Sigmoid colon (tissue), 7 donors: ENCODE measurements at regions of chr9 and their contacts with region 1.

Region 1: GRCh38 chr9:125407974-125408900 is 146.6 kb downstream of the GAPVD1 start:
- DNase-seq: peak; percentile 91
- H3K4me3 ChIP-seq: peak overlapping the region; percentile 53 to 81 (median 68)
- H3K27ac ChIP-seq: peak overlapping the region; percentile 4 to 80 (median 79)
- H3K4me1 ChIP-seq: peaks cover 0 to 18% (median 13%) of the 10 kb centered on the region in 4 donors
- H3K27me3 ChIP-seq: no peaks in the 10 kb centered on the region
- CTCF ChIP-seq: peak; percentile 81 to 89 (median 86)
- EP300 ChIP-seq: no peak
- POLR2A ChIP-seq: no peak

Region 2: GRCh38 chr9:125372441-125373226 is 35.6 kb before region 1 on chr9:
- intact Hi-C with region 1: no loop called
- DNase-seq: no peak
- H3K4me3 ChIP-seq: no peak overlapping the region
- H3K27ac ChIP-seq: no peak overlapping the region
- H3K4me1 ChIP-seq: peaks cover 0 to 10% (median 7%) of the 10 kb centered on the region in 4 donors
- H3K27me3 ChIP-seq: peaks cover 0 to 6% (median 0%) of the 10 kb centered on the region in 3 donors
- CTCF ChIP-seq: no peak
- EP300 ChIP-seq: no peak
- POLR2A ChIP-seq: no peak

Region 3: DNA sequence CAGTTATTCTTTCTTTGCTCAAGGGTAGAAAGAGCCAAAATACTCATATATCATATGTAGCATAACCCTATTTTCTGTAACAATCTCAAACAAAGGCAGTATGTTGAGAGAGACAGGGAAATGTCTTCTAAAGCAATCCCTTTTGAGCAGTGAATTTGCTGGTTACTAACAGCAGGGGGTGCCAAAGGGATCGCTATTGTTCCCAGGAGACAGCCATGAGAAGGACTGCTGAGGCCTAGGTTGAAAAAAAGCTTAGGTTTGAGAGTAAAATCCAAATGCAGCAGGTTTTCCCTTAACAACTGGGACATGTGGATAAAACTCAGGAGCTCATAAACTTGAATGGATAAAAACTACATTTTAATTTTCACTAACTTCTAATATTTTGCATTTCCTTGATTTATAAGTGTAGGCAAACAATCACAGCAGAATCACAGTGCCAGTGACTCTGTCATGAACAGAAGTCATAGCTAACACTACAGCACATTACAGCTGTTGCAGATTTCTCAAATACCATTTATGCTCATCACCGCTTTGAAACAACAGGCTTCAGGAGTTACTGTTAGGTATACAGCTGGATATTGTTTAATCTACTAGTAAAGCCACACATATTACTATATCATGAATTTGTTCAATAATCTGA is 150.3 kb after region 1 on chr9:
- intact Hi-C with region 1: loop called (anchors 5 kb)
- DNase-seq: peak; percentile 83
- H3K4me3 ChIP-seq: no peak overlapping the region
- H3K27ac ChIP-seq: peak overlapping the region in 3 of 4 donors; percentile 4 to 42 (median 24)
- H3K4me1 ChIP-seq: peaks cover 0 to 51% (median 28%) of the 10 kb centered on the region in 4 donors
- H3K27me3 ChIP-seq: no peaks in the 10 kb centered on the region
- CTCF ChIP-seq: peak; percentile 59 to 77 (median 74)
- EP300 ChIP-seq: no peak
- POLR2A ChIP-seq: no peak

Region 4: GRCh38 chr9:125631391-125632085 is 223.3 kb after region 1 on chr9:
- intact Hi-C with region 1: loop called (anchors 5 kb)
- DNase-seq: no peak
- H3K4me3 ChIP-seq: no peak overlapping the region
- H3K27ac ChIP-seq: no peak overlapping the region
- H3K4me1 ChIP-seq: peaks cover 0 to 49% (median 27%) of the 10 kb centered on the region in 4 donors
- H3K27me3 ChIP-seq: no peaks in the 10 kb centered on the region
- CTCF ChIP-seq: peak; percentile 44 to 69 (median 48)
- EP300 ChIP-seq: no peak
- POLR2A ChIP-seq: no peak

Region 5: GRCh38 chr9:125911861-125912644 is 503.8 kb after region 1 on chr9:
- intact Hi-C with region 1: loop called (anchors 10 kb)
- DNase-seq: no peak
- H3K4me3 ChIP-seq: no peak overlapping the region
- H3K27ac ChIP-seq: no peak overlapping the region
- H3K4me1 ChIP-seq: peaks cover 0 to 76% (median 35%) of the 10 kb centered on the region in 4 donors
- H3K27me3 ChIP-seq: no peaks in the 10 kb centered on the region
- CTCF ChIP-seq: no peak
- EP300 ChIP-seq: no peak
- POLR2A ChIP-seq: no peak

Region 6: DNA sequence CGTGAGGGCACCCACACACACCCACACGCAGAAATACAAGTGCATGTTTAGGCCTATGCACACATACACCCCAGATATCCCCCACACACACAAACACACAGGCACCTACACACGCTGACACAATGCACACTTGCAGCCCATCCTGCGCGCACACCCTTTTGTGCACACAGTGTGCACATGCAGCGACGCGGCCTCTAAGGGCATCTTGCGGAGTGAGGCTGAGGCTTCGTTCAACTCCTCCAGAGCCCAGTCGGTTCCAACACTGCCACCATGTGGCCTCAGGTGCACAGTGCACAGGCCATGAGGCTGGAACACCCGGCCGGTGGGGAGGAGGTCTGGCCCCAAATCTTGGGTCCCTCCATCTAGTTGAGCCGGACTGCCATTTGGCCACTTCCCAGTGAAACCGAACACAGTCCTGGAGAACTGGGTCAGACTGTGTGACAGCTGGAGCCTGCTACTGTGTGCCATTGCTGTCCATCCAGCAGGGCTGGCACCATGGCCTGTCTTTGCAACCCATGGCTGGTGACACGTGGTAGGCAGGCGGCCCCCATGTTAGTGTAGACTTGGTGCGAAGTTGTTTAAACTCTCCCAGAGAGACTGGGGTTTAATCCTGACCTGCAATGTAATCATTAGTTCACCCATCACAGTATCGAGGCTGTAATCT is 820.7 kb after region 1 on chr9:
- intact Hi-C with region 1: loop called (anchors 1 kb)
- DNase-seq: peak; percentile 84
- H3K4me3 ChIP-seq: no peak overlapping the region
- H3K27ac ChIP-seq: no peak overlapping the region
- H3K4me1 ChIP-seq: peaks cover 0 to 6% (median 0%) of the 10 kb centered on the region in 4 donors
- H3K27me3 ChIP-seq: peaks cover 0 to under 1% (median 0%) of the 10 kb centered on the region in 3 donors
- CTCF ChIP-seq: peak; percentile 87 to 98 (median 95)
- EP300 ChIP-seq: no peak
- POLR2A ChIP-seq: no peak

Region 7: DNA sequence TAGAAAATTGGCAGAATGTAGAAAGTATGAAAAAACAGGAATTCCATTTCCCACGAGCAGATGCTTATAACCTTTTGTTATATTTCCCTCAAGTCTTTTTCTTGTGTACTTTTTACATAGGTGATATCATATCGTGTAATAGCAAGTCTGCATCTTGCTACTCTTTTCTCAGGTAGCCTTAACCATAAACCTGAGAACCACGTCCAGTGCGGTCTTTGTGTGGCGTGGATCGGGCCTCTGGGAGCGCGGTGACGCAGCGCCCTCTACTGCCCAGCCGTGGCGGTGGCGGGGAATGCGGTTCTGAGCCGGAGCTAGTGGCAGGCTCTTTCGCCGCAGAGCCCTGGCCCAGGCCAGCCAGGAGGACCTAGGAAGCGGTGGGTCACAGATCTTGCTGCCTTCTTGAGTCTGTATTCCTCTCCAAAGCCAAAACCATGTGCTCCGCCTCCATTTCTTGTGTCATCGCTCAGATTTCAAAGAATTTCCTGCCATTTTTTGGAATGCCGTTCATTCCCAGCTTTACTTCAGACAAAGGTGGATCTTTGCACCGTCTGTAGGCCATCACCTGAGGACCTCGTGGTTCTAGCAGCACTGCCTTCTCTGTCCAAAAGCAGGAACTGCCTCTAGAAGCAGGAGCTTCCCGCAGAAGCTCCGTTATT is 990.3 kb after region 1 on chr9:
- intact Hi-C with region 1: loop called (anchors 5 kb)
- DNase-seq: peak; percentile 86
- H3K4me3 ChIP-seq: no peak overlapping the region
- H3K27ac ChIP-seq: no peak overlapping the region
- H3K4me1 ChIP-seq: peaks cover 0 to 10% (median 3%) of the 10 kb centered on the region in 4 donors
- H3K27me3 ChIP-seq: no peaks in the 10 kb centered on the region
- CTCF ChIP-seq: peak; percentile 76 to 95 (median 92)
- EP300 ChIP-seq: no peak
- POLR2A ChIP-seq: no peak